Activated T-helper 2 cell treated with anti-CD3 and anti-CD28 coated beads, Interferon-gamma antibody, Interleukin-2, Interleukin-4, amounts not matched to agents 10 μg/mL and 5 μg/mL and 100 μg/mL, durations not matched to agents 14 hours and 24 hours and 36 hours (primary cell): ENCODE measurements at regions of chr13 and their contacts with region 1.

Region 1: GRCh38 chr13:99417201-99418102 is 83.8 kb upstream of the TM9SF2 start:
- DNase-seq: no peak
- H3K4me3 Mint-ChIP-seq: peak overlapping the region; percentile 48
- H3K27ac Mint-ChIP-seq: peak overlapping the region; percentile 74
- H3K4me1 Mint-ChIP-seq: peaks cover 51% of the 10 kb centered on the region
- H3K27me3 Mint-ChIP-seq: no peaks in the 10 kb centered on the region

Region 2: DNA sequence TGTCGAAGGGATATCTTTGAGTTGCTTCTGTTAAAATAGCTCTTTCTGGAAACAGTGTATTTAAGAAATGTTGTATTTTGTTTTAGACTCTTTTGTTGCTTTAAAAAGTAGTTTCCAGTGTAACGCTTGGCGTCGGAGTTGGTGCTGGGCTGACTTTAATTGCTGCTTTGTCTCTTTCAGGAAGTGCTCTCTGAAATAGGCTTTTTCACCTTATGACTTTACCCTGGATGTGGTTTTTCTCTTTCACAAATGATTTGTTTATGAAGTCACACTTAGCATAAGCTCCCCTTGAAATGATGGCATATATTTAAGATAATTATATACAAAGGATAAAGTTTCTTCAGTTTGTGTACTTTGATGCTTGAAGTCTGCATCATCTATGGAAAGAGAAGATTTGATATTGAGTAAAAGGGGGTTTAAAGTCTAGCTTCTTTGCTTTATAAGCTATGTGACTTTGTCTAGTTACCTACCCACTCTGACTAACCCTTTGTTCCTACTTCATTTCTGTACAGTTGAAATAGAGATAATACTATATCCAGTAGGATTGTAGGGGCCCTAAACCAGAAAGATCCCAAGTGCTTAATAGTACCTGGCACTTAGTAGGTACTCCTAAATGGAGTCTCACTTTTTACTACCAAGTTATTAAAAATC is 159.1 kb before region 1 on chr13 and contains the start of gene GPR18:
- intact Hi-C with region 1: no loop called
- DNase-seq: peak; percentile 31
- H3K4me3 Mint-ChIP-seq: peak within 1 kb of the TSS; percentile 97
- H3K27ac Mint-ChIP-seq: peak within 1 kb of the TSS; percentile 97
- H3K4me1 Mint-ChIP-seq: peaks cover 61% of the 10 kb centered on the region
- H3K27me3 Mint-ChIP-seq: no peaks in the 10 kb centered on the region
- total RNA-seq, gene GPR18: 7.4 and 8.4 TPM in 2 replicates

Region 3: DNA sequence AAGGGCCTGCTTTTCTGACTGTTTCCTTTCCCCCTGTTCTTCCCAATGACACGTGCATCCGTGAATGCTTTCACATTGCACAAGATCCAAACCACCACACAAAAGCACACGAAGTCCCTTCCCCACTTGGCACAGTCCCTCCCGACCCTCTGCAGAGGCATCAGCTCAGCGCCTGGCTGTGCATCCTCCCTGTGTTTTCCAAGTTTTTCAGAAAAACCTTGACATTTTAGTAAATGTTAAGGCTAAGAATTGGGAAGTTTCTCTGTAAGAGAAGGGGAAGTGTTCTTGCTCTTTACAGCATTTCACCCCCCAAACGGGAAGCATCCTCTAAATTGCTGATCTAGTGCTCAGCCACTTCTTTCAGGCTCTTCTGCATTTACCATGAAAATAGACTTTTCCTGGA is 10.7 kb before region 1 on chr13:
- intact Hi-C with region 1: loop called (anchors 1 kb)
- DNase-seq: no peak
- H3K4me3 Mint-ChIP-seq: no peak overlapping the region
- H3K27ac Mint-ChIP-seq: no peak overlapping the region
- H3K4me1 Mint-ChIP-seq: peaks cover 33% of the 10 kb centered on the region
- H3K27me3 Mint-ChIP-seq: no peaks in the 10 kb centered on the region